Activated CD4-positive, alpha-beta T cell treated with anti-CD3 and anti-CD28 coated beads for 36 hours (primary cell): ENCODE measurements at regions of chr1 and their contacts with region 1.

Region 1: DNA sequence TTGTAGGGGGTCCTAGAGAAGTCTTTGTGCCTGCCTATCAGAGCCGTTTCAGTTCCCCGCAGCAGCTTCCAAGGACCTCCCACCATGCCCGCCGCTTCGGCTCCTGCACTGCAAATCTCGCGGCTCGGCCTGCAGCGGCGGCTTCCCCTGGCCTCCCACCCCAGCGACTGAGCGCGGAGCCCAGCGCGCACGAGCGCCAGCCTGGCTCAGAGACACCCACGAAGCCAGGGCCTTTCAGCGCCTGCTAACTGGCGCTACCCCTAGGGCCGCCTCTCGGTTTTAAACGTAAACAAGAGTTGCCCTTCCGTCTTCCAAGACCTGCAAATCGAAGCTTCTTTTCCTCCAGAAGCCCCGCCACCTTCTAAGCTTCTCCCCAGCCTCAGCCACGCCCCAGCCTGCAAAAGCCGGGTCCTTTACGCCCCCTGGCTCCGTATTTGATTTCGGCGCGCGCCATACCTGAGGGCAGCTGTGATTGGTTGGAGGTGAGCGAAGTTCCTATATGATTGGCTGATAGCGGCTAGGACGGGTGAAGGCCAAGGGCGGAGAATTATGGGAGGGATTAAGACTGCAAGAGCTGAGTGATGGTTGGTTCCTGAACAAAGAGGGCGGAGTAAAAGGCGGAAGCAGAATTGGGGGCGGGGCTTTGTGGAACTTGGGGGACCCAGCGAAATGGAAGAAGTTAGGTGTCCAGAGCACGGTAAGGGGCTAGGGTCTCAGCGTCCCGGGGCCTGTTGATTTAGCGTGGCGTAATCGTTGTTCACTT is at the start of gene TTF2:
- DNase-seq: peak; percentile 98
- ATAC-seq: peak; percentile 94
- H3K4me3 Mint-ChIP-seq: no peak within 1 kb of the TSS
- H3K27ac Mint-ChIP-seq: no peak within 1 kb of the TSS
- H3K4me1 Mint-ChIP-seq: peaks cover 41% of the 10 kb centered on the region
- H3K27me3 Mint-ChIP-seq: no peaks in the 10 kb centered on the region
- total RNA-seq, gene TTF2: 99.7 to 108 TPM

Region 2: GRCh38 chr1:116514708-116515525 is 544.9 kb before region 1 on chr1:
- CTCF ChIA-PET with region 1: no interaction called
- POLR2A ChIA-PET with region 1: no interaction called
- intact Hi-C with region 1: loop called (anchors 5 to 10 kb)
- DNase-seq: peak; percentile 78
- ATAC-seq: peak; percentile 94
- H3K4me3 Mint-ChIP-seq: peak overlapping the region; percentile 39
- H3K27ac Mint-ChIP-seq: peak overlapping the region; percentile 85
- H3K4me1 Mint-ChIP-seq: peaks cover 56% of the 10 kb centered on the region
- H3K27me3 Mint-ChIP-seq: no peaks in the 10 kb centered on the region

Region 3: DNA sequence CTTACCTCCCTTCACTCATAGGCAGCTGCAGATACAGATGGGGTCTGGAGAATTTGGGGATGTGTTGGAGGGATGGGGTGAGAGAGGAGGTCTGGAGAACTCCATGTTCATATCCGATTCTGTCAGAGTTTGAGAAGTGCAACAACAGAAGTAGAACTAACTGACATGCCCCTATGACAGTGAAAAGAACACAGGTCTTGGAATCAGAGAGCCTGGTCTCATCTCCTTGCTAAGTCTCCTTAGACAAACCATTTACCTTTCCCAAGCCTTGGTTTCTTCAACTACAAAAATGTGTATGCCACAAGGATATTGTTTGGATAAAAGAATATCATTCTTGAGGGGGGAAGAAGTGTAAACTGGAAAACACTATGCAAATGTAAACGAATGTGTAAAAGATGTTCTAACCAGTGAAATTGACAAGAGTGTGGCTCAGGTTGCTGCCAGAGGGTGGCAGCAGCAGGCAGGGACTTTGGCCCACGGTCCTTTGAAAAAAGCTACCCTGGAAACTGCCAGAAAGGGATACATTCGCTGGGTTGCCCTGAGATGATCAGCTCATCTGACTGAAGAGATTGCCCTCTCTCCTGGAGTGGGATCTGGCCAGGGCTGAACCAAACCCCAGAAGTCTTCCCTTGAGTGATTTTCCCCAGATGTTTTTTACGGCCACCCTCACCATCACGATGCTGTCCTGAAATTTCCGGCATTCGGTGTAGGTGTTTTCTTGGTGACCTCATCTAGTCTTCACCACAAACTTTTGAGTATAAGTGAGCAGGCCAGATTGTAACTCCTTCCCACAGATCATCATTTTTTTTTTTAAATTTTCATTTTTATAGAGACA is 322.6 kb before region 1 on chr1:
- CTCF ChIA-PET with region 1: interaction called, 28 read pairs
- POLR2A ChIA-PET with region 1: interaction called, 55 read pairs
- intact Hi-C with region 1: loop called (anchors 1 kb)
- DNase-seq: peak; percentile 86
- ATAC-seq: peak; percentile 56
- H3K4me3 Mint-ChIP-seq: peak overlapping the region; percentile 71
- H3K27ac Mint-ChIP-seq: peak overlapping the region; percentile 98
- H3K4me1 Mint-ChIP-seq: peaks cover 57% of the 10 kb centered on the region
- H3K27me3 Mint-ChIP-seq: no peaks in the 10 kb centered on the region

Region 4: GRCh38 chr1:116817582-116818064 is 242.2 kb before region 1 on chr1:
- CTCF ChIA-PET with region 1: interaction called, 7 read pairs
- POLR2A ChIA-PET with region 1: interaction called, 3 read pairs
- intact Hi-C with region 1: loop called (anchors 1 to 2 kb)
- DNase-seq: peak; percentile 88
- ATAC-seq: peak; percentile 65
- H3K4me3 Mint-ChIP-seq: peak overlapping the region; percentile 44
- H3K27ac Mint-ChIP-seq: peak overlapping the region; percentile 91
- H3K4me1 Mint-ChIP-seq: peaks cover 59% of the 10 kb centered on the region
- H3K27me3 Mint-ChIP-seq: no peaks in the 10 kb centered on the region

Region 5: DNA sequence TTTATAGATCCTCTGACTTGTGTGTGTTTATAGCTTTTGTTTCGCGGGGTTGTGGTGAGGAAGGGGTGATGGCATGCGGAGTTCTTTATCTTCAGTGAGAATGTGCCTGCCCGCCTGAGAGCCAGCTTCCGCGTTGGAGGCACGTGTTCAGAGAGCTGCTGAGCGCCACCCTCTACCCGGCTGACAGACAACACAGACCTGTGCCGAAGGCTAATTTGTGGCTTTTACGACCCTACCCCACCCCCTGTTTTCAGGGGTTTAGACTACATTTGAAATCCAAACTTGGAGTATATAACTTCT is 72.7 kb before region 1 on chr1:
- CTCF ChIA-PET with region 1: interaction called, 3 read pairs
- POLR2A ChIA-PET with region 1: interaction called, 4 read pairs
- intact Hi-C with region 1: loop called in 1 of 2 experiments (anchors 2 kb)
- DNase-seq: peak; percentile 80
- ATAC-seq: peak; percentile 81
- H3K4me3 Mint-ChIP-seq: peak overlapping the region; percentile 69
- H3K27ac Mint-ChIP-seq: peak overlapping the region; percentile 93
- H3K4me1 Mint-ChIP-seq: peaks cover 53% of the 10 kb centered on the region
- H3K27me3 Mint-ChIP-seq: no peaks in the 10 kb centered on the region

Region 6: GRCh38 chr1:117093870-117094621 is 34.2 kb after region 1 on chr1:
- CTCF ChIA-PET with region 1: interaction called, 89 read pairs
- POLR2A ChIA-PET with region 1: interaction called, 6 read pairs
- intact Hi-C with region 1: loop called in 1 of 2 experiments (anchors 2 kb)
- DNase-seq: peak; percentile 60
- ATAC-seq: peak; percentile 85
- H3K4me3 Mint-ChIP-seq: no peak overlapping the region
- H3K27ac Mint-ChIP-seq: no peak overlapping the region
- H3K4me1 Mint-ChIP-seq: peaks cover 19% of the 10 kb centered on the region
- H3K27me3 Mint-ChIP-seq: no peaks in the 10 kb centered on the region

Region 7: GRCh38 chr1:117605774-117606648 is 546.2 kb after region 1 on chr1 and contains the start of gene TENT5C:
- CTCF ChIA-PET with region 1: no interaction called
- POLR2A ChIA-PET with region 1: no interaction called
- intact Hi-C with region 1: loop called (anchors 1 to 5 kb)
- DNase-seq: peak; percentile 98
- ATAC-seq: peak; percentile 96
- H3K4me3 Mint-ChIP-seq: peak within 1 kb of the TSS; percentile 92
- H3K27ac Mint-ChIP-seq: peak within 1 kb of the TSS; percentile 86
- H3K4me1 Mint-ChIP-seq: peaks cover 37% of the 10 kb centered on the region
- H3K27me3 Mint-ChIP-seq: peaks cover 2% of the 10 kb centered on the region
- total RNA-seq, gene TENT5C: 6.0 to 6.4 TPM